ENCODE measurements at regions of chrX and their contacts with region 1.

Region 1: DNA sequence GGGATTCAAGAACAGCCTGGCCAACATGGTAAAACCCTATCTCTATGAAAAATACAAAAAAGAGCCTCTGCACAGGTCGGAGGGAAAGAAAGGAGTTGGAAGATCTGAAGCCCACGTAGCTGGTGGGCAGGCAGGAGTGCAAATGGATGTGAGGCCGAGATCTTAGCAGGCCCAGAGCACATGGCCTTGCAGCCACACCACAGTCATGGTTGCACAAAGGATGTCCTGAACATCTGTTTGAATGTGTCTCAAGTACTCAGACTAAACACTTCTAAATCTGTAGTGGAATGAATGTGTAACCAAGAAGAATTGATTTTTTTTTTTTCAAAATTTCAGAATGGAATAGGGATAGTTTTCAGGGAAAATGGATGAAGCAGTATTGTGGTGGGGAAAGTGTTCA is 10.8 kb downstream of the CA5B start:
- H3K4me3 ChIP-seq: no peak overlapping the region
- H3K27ac ChIP-seq: no peak overlapping the region
- H3K4me1 ChIP-seq: peaks cover 22% of the 10 kb centered on the region
- CTCF ChIP-seq: no peak

Region 2: DNA sequence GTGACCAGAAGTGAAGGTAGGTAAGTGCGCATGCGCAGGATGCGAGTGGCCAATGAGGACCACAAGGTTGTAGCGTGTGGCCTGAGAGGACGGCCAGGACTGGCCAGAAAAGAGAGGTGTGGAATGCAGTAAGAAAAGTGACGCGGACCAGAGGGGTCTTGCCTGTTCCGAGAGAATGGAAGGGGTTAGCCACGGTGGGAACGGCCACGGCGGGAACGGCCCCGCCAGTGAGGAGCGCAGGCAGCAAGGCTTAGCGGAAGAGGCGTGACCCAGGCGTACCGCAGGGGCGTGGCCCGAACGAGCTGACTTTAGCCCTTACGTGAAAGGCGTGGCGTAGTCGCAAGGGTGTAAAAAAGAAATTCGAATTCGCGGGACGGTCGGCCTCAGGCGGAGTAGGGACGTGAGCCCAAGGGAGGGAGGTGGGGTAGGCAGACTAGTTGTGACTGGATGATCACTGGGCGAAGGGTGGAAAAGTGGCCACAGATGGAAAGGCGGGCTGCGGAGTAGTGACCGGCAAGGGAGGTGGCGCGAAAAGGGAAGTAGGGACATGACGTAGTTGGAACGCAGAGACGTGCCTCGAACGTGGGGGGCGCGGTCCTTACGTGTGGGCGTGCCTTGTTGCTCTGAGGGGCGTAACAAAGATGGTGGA is 73.9 kb before region 1 on chrX:
- CTCF ChIA-PET with region 1: no interaction called
- POLR2A ChIA-PET with region 1: no interaction called
- H3K4me3 ChIP-seq: peak overlapping the region; percentile 95
- H3K27ac ChIP-seq: peak overlapping the region; percentile 95
- H3K4me1 ChIP-seq: peaks cover 3% of the 10 kb centered on the region; the same call in 1 of the 2 replicates
- CTCF ChIP-seq: peak; percentile 50

Region 3: DNA sequence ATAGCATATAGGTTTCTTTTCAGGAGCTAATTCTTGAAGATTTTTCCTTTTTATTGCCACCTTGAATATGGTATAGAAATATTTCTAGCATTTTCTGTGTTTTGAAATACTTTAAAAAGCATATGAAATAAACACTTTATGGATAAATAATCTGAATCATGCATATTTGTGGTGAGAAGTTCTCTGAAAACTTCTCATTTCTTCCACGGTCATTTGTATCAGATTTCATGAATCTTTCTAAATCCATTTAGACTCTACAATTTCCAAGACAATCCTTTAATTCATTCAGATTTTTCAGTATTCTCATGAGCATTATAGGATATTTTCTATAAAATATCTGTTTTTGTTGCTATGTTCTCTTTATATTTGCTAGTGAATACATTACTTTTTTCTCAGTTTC is 26.9 kb before region 1 on chrX:
- CTCF ChIA-PET with region 1: no interaction called
- POLR2A ChIA-PET with region 1: no interaction called
- H3K4me3 ChIP-seq: no peak overlapping the region
- H3K27ac ChIP-seq: no peak overlapping the region
- H3K4me1 ChIP-seq: no peaks in the 10 kb centered on the region
- CTCF ChIP-seq: no peak

Region 4: DNA sequence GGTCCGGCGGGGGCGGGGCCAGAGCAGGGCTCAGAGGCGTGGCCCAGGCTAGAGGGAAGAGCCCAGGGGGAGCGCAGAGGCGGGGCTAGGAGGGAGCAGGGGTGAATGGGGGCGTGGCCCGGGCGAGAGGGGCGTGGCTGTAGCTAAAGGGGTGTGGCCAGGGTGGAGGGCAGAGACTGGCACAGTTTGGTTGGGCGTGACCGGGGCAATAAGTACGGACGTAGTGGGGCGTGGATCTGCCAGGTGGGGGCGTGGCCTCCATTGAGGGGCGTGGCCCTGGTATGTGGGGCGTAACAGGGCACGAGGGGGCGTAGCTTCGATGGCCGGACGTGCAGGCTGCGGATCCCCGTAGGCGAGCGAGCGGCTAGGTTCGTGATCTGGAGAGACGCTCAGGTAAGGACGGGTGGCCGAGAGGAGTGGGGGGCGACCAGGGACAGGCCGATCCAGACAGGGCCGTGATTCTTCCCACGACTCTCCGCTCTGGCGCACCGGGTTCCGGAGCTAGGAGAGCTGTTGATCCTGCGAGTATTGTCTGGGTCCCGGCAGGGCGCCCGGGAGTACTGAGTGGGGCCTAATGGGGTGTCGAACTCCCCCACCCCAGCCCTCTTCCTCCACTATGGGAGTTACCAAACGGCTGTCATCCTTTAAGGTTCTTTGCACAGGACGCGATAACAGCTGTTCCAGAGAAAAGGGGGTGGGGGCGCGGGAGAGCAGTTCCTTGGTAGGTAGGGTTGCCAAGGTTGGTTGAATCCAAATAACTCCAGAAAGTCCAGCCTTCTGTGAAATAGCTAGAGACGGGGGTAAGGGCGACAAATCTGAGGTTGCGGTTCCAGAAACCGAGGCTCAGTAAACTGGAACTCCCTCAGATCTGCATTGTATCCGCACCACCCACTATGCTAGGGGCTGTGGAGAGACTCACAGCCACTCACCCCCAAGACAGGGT is 10.6 kb before region 1 on chrX and contains the start of gene CA5B:
- CTCF ChIA-PET with region 1: interaction called, 4 read pairs
- POLR2A ChIA-PET with region 1: interaction called, 10 read pairs
- H3K4me3 ChIP-seq: peak within 1 kb of the TSS; percentile 58
- H3K27ac ChIP-seq: no peak within 1 kb of the TSS; the same call in 1 of the 2 replicates
- H3K4me1 ChIP-seq: peaks cover 17% of the 10 kb centered on the region
- CTCF ChIP-seq: peak; percentile 29; the same call in 1 of the 2 replicates

Region 5: DNA sequence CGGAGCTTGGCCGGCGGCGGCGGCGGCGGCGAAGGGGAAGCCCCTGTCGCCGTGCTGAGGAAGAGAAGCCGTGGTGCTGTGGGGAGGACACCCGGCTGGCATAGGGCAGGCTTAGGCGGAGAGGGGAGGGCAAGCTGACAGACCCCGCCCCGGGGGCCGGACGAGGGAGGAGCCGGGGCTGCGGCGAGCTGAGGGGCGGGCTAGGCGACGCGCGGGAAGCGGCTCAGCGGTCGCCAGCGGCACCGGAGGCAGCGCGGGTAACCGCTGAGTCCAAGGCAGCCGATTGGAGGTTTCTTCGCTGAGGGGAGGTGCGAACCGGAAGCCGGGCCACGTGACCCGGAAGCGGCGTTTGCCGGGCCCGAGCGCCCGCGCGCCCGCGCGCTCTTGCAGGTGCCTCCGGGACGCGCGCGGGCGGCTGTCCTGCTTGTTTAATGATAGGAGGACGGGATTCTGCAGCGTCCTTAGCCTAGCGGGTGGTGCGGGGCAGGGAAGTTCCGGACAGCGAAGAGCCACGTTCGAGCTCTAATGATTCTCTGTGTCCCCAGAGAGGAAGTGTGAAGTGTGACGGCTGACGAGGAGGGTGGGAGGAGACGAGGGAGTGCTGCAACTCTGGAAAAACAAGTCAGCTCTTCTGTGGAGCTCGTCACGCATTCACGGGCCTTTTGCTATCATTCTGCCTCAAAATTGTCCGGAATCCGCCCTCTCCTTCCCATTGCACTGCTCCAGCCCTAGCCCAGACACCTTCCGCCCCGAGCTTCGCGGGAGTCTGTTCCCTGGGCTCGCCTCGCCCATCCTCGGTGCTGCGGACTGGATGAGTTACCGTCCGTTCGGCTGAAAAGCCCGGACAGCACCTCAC is 106.1 kb after region 1 on chrX and contains the start of gene AP1S2:
- CTCF ChIA-PET with region 1: no interaction called
- POLR2A ChIA-PET with region 1: no interaction called
- H3K4me3 ChIP-seq: peak within 1 kb of the TSS; percentile 97
- H3K27ac ChIP-seq: peak within 1 kb of the TSS; percentile 82
- H3K4me1 ChIP-seq: peaks cover 7% of the 10 kb centered on the region; the same call in 1 of the 2 replicates
- CTCF ChIP-seq: no peak